Posterior vena cava (tissue), 2 donors: ENCODE measurements at regions of chr16 and their contacts with region 1.

Region 1: DNA sequence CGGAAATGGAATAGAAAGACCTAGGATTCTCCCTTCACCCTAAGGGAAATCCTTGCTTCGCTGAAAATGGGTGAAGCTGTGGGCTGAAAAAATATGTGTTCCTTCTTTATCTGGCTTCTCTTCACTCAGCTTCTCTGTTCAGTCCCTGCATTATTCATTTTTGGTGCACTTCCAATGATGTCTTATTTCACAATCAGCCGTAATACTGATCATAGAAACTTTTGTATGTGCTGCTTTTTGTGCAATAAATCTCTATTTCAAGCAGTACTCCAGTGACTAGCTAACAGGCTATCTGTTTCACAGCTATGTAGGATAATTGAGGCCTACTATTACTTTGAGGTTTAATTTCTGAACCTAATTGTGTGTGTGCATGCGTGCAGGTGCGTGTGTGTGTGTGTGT is 144.6 kb downstream of the FOXL1 start:
- DNase-seq: no peak

Region 2: GRCh38 chr16:86771506-86772460 is 48.8 kb after region 1 on chr16:
- intact Hi-C with region 1: loop called in 1 of 2 experiments (anchors 2 kb)
- DNase-seq: no peak